ENCODE measurements at regions of chr5 and their contacts with region 1.

Region 1: DNA sequence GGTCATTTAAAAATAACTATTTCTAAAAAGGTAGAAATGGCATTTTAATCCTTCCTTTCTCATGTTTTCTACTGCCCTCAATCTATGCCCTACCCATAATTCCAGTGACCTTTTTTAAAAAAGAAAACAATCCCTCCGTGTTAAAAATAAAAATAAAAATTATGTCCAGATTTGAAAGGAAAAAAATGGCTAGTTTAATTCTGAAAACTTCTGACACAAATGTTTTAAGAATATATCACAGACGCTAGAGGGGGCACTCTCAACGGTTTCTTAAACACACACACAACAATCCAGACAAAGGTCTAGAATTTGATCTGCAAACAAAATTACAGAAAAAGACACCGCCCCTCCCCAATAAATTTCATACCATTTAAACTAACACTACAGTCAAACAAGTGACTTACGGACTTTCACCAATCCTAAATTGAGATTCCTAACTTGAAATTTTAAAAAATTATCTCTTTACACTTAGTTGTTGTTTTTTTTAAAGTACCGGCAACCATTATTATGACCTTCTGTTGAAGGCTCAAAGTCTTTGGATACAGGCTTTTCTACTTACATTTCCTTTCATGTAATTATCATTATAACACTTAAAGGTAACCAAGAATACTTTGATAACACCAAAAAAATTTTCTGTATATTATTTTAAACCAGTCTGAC is 38.2 kb downstream of the CLINT1 start:
- DNase-seq: peak; percentile 52
- H3K4me3 Mint-ChIP-seq: no peak overlapping the region
- H3K27ac Mint-ChIP-seq: peak overlapping the region; percentile 7
- H3K4me1 Mint-ChIP-seq: peaks cover 35% of the 10 kb centered on the region
- H3K27me3 Mint-ChIP-seq: no peaks in the 10 kb centered on the region
- CTCF ChIP-seq: no peak

Region 2: DNA sequence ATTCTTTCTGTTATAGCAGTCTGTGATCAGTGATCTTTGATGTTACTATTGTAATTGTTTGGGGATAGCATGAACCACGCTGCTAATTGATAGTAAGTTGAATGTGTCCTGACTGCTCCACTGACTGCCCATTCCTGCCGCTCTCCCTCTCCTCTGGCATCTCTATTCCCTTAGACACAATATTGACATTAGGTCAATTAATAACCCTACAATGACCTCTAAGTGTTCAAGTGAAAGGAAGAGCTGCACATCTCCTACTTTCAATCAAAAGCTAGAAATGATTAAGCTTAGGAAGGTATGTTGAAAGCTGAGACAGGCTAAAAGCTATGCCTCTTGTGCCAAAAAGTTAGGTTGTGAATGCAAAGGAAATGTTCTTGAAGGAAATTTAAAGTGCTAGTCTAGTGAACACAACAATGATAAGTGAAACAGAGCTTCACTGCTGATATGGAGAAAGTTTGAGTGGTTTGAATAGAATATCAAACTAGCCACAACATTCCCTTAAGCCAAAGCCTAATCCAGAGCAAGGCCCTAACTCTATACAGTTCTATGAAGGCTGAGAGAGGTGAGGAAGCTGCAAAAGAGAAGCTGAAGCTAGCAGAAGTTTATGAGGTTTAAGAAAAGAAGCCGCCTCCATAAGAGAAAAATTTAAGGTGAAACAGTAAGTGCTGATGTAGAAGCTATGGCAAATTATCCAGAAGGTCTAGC is 25.3 kb after region 1 on chr5:
- CTCF ChIA-PET with region 1: no interaction called
- intact Hi-C with region 1: loop called (anchors 2 kb)
- DNase-seq: no peak
- H3K4me3 Mint-ChIP-seq: peak overlapping the region; percentile 15
- H3K27ac Mint-ChIP-seq: peak overlapping the region; percentile 17
- H3K4me1 Mint-ChIP-seq: peaks cover 46% of the 10 kb centered on the region
- H3K27me3 Mint-ChIP-seq: no peaks in the 10 kb centered on the region
- CTCF ChIP-seq: no peak

Region 3: GRCh38 chr5:157855404-157855994 is 34.8 kb after region 1 on chr5:
- CTCF ChIA-PET with region 1: interaction called, 5 read pairs
- intact Hi-C with region 1: loop called (anchors 2 kb)
- DNase-seq: peak; percentile 63
- H3K4me3 Mint-ChIP-seq: peak overlapping the region; percentile 76
- H3K27ac Mint-ChIP-seq: peak overlapping the region; percentile 31
- H3K4me1 Mint-ChIP-seq: peaks cover 42% of the 10 kb centered on the region
- H3K27me3 Mint-ChIP-seq: no peaks in the 10 kb centered on the region
- CTCF ChIP-seq: peak; percentile 60

Region 4: DNA sequence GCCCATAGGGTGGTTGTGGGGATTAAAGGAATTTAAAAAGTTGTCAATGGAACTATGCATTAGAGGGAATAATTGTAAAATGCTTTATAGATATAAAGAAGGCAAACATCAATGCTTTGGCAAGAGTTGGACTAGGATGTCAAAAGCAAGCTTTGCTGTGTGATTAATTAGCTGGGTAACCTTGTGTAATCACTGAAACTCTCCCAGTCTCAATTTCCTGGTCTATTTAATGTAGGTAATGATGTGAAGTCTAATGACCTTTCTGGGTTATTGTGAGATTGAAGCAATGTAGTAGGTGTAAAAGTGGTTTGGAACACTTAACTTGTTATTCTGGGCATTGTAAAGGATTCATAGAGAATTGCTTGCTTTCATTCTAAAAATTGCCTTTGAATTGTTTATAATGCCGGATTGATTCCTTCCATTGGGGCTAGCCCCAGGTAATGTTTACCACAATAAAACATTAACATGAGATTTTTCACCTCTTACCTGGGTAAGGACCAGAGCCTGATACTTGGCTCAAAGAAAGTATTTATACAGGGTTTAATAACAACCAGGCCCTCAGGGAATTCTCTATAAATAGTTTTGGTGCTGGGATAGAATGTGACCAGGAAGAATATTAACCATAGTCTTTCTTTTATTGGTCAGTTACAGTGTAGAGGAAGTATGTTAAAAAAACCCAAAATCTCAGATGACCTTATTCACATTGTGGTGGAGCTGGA is 68.2 kb after region 1 on chr5:
- CTCF ChIA-PET with region 1: no interaction called
- intact Hi-C with region 1: loop called (anchors 2 kb)
- DNase-seq: peak; percentile 39
- H3K4me3 Mint-ChIP-seq: peak overlapping the region; percentile 47
- H3K27ac Mint-ChIP-seq: peak overlapping the region; percentile 79
- H3K4me1 Mint-ChIP-seq: peaks cover 49% of the 10 kb centered on the region
- H3K27me3 Mint-ChIP-seq: no peaks in the 10 kb centered on the region
- CTCF ChIP-seq: no peak

Region 5: DNA sequence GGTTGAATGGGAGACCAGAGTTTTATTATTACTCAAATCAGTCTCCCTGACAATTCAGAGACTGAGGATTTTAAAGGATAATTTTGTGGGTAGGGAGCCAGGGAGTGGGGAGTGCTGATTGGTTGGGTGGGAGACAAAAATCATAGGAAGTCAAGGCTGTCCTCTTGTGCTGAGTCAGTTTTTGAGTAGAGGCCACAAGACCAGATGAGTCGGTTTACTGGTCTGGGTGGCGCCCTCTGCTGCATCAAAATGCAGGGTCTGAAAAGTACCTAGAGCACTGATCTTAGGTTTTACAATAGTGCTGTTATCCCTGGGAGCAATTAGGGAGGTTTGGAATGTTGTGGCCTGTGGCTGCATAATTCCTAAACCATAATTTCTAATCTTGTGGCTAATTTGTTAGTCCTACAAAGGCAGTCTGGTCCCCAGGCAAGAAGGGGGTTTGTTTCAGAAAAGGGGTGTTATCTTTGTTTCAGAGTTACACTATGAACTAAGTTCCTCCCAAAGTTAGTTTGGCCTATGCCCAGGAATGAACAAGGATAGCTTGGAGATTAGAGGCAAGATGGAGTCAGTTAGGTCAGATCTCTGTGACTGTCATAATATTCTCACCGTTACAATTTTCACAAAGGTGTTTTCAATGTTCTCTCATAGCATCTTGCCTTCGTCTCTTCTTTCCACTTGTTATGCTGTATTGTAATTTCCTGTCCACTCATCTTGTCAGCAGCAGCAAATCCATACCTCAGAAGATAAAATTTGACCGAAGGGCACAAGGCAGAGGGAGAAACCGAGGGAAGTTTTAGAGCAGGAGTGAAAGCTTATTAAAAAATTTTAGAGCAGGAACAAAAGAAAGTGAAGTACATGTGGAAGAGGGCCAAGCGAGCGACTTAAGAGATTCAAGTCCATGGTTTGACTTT is 97.4 kb after region 1 on chr5:
- CTCF ChIA-PET with region 1: interaction called, 4 read pairs
- intact Hi-C with region 1: loop called (anchors 1 kb)
- DNase-seq: peak; percentile 86
- H3K4me3 Mint-ChIP-seq: peak overlapping the region; percentile 60
- H3K27ac Mint-ChIP-seq: peak overlapping the region; percentile 92
- H3K4me1 Mint-ChIP-seq: peaks cover 70% of the 10 kb centered on the region
- H3K27me3 Mint-ChIP-seq: no peaks in the 10 kb centered on the region
- CTCF ChIP-seq: peak; percentile 61

Region 6: GRCh38 chr5:157994906-157995519 is 174.3 kb after region 1 on chr5:
- CTCF ChIA-PET with region 1: interaction called, 20 read pairs
- intact Hi-C with region 1: loop called (anchors 1 kb)
- DNase-seq: peak; percentile 86
- H3K4me3 Mint-ChIP-seq: peak overlapping the region; percentile 47
- H3K27ac Mint-ChIP-seq: peak overlapping the region; percentile 7
- H3K4me1 Mint-ChIP-seq: peaks cover 21% of the 10 kb centered on the region
- H3K27me3 Mint-ChIP-seq: no peaks in the 10 kb centered on the region
- CTCF ChIP-seq: peak; percentile 70

Region 7: GRCh38 chr5:158074992-158075769 is 254.5 kb after region 1 on chr5:
- CTCF ChIA-PET with region 1: no interaction called
- intact Hi-C with region 1: loop called (anchors 5 kb)
- DNase-seq: peak; percentile 74
- H3K4me3 Mint-ChIP-seq: peak overlapping the region; percentile 43
- H3K27ac Mint-ChIP-seq: peak overlapping the region; percentile 55
- H3K4me1 Mint-ChIP-seq: peaks cover 8% of the 10 kb centered on the region
- H3K27me3 Mint-ChIP-seq: peaks cover 40% of the 10 kb centered on the region
- CTCF ChIP-seq: peak; percentile 70